Mammary epithelial cell (primary cell): ENCODE measurements at regions of chr14 and their contacts with region 1.

Region 1: DNA sequence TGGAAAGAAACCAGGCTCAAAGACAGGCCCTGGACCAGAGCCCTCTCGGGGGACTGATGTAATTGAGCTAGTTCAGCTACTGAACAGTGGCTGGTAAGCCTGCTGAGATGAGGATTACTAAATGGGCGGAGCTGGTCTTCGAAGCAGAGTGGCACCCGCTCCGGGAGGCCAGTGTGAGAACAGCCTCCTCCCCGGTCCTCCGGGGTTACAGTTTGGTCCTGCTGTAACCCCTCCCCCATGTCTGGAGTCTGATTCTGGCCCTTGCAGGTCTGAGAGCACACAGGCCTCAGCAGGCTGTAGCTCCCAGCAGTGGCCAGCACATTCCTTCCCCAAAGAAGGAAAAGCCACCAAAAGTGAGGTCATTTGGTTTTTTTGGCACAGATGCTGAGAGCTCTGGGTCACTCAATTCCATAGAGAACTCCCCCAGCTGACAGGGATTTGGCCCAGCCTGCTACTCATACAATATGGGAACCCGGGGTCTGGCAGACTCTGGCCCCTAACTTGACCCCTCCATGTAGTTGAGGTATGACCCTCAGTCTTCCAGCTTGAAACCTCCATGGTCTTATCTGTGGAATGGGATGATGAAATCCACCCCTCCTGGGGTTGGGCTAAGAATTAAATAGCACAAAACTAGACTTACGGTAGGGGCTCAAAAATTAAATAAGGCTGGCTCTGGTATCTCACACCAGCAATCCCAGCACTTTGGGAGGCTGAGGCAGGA is 39.0 kb downstream of the ACTN1 start:
- DNase-seq: peak; percentile 92
- H3K4me3 ChIP-seq: no peak overlapping the region
- H3K27ac ChIP-seq: peak overlapping the region; percentile 64
- H3K4me1 ChIP-seq: peaks cover 96% of the 10 kb centered on the region
- H3K27me3 ChIP-seq: no peaks in the 10 kb centered on the region
- CTCF ChIP-seq: no peak

Region 2: DNA sequence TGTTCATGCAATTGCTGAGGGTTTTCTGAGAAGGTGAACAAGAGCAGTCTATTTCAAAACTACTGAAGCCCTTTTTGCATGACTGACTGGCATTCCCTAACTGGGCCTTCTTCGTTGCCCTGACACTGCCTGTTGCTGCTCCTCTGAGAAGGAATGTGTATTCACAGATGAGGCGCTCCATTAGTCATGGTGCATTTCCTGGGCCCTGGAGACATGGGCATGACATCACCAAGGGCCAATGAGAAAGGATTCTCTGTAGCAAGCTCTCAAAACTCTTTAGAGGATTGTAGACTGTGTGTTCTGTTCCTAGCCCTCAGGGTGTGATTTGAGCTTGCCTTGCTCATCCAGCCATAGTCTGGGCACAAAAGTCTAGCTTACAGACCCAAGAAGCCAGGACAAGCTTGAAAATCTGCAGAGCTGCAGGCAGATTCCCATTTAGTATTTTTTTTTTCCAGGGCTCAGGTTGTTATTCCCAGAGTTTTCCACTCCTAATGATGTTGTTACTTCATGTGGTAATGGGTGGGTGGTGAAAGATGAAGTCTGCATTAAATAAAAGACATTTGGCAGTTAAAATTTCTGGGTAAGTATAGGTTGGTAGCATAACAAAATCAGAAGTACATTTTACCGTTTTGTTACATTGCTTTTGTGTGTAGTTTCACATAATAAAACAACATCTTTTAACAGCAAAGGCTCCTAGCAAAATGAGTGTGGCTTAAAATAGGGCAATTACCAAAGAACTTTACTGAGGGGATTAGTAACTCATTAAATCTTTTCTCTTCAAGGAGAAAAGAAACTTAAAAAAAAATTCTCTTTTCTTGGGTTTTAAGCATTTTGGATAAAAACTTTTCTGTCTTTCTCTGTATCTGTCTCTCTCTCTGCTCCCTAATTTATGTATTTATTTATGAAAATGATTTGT is 802.1 kb before region 1 on chr14:
- CTCF ChIA-PET with region 1: no interaction called
- dilution Hi-C with region 1: no loop called
- in situ Hi-C with region 1: no loop called
- intact Hi-C with region 1: loop called (anchors 10 kb)
- DNase-seq: peak; percentile 99
- H3K4me3 ChIP-seq: no peak overlapping the region
- H3K27ac ChIP-seq: peak overlapping the region; percentile 99
- H3K4me1 ChIP-seq: peaks cover 63% of the 10 kb centered on the region
- H3K27me3 ChIP-seq: no peaks in the 10 kb centered on the region
- CTCF ChIP-seq: no peak

Region 3: GRCh38 chr14:68874746-68875155 is 65.3 kb before region 1 on chr14:
- CTCF ChIA-PET with region 1: no interaction called
- dilution Hi-C with region 1: loop called (anchors 5 kb)
- in situ Hi-C with region 1: no loop called
- intact Hi-C with region 1: loop called (anchors 2 kb)
- DNase-seq: no peak
- H3K4me3 ChIP-seq: no peak overlapping the region
- H3K27ac ChIP-seq: no peak overlapping the region
- H3K4me1 ChIP-seq: no peaks in the 10 kb centered on the region
- H3K27me3 ChIP-seq: no peaks in the 10 kb centered on the region
- CTCF ChIP-seq: no peak

Region 4: GRCh38 chr14:68926236-68926635 is 13.8 kb before region 1 on chr14:
- CTCF ChIA-PET with region 1: no interaction called
- dilution Hi-C with region 1: no loop called
- in situ Hi-C with region 1: no loop called
- intact Hi-C with region 1: loop called (anchors 1 kb)
- DNase-seq: no peak
- H3K4me3 ChIP-seq: no peak overlapping the region
- H3K27ac ChIP-seq: no peak overlapping the region
- H3K4me1 ChIP-seq: peaks cover 41% of the 10 kb centered on the region
- H3K27me3 ChIP-seq: no peaks in the 10 kb centered on the region
- CTCF ChIP-seq: peak; percentile 64 to 78

Region 5: DNA sequence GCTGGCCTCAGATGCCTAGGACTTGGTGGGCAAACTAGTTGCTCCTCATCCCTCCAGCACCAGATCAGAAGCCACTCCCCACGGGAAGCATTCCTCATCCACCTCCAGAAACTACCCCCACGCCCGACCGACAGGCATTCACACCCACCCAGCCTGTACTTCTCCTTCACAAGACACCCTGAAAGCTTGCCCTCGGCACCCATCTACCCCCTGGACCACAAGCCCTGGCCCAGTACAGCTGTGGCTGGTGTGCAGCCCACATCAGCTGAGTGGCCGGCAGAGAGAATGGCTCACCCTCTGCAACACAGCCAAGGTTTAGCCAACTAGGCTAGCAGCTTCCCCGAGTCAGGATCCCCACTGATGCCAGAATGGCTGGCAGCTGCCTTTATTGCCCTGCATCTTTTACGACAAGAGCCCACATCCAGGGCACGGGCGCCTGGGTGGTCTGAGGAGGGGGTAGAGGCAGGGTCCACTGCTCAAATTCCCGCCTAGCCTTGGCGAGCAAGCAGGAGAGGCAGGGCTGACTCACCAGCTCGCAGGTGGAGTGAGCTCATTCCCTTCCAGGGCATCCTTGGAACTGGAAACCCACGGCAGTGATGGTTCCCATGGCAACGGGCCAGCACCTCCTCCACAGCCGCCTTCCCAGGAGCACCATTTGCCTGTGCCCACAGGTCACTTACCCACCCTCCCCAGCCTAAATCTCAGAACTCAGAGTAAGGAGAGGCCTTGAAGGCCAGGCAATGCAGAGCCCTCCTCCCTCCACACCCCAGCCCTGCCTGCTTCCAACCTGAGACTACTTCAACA is 21.9 kb after region 1 on chr14:
- CTCF ChIA-PET with region 1: no interaction called
- dilution Hi-C with region 1: no loop called
- in situ Hi-C with region 1: no loop called
- intact Hi-C with region 1: loop called (anchors 1 kb)
- DNase-seq: peak; percentile 92
- H3K4me3 ChIP-seq: no peak overlapping the region
- H3K27ac ChIP-seq: peak overlapping the region; percentile 43
- H3K4me1 ChIP-seq: peaks cover 99% of the 10 kb centered on the region
- H3K27me3 ChIP-seq: no peaks in the 10 kb centered on the region
- CTCF ChIP-seq: no peak

Region 6: GRCh38 chr14:69090187-69090789 is 150.2 kb after region 1 on chr14:
- CTCF ChIA-PET with region 1: interaction called, 4 read pairs
- dilution Hi-C with region 1: no loop called
- in situ Hi-C with region 1: loop called in 1 of 2 experiments (anchors 10 kb)
- intact Hi-C with region 1: loop called (anchors 1 kb)
- DNase-seq: peak; percentile 55
- H3K4me3 ChIP-seq: no peak overlapping the region
- H3K27ac ChIP-seq: no peak overlapping the region
- H3K4me1 ChIP-seq: peaks cover 55% of the 10 kb centered on the region
- H3K27me3 ChIP-seq: no peaks in the 10 kb centered on the region
- CTCF ChIP-seq: peak; percentile 82 to 92

Region 7: GRCh38 chr14:69346710-69347109 is 406.7 kb after region 1 on chr14:
- CTCF ChIA-PET with region 1: no interaction called
- dilution Hi-C with region 1: no loop called
- in situ Hi-C with region 1: no loop called
- intact Hi-C with region 1: no loop called
- DNase-seq: no peak
- H3K4me3 ChIP-seq: no peak overlapping the region
- H3K27ac ChIP-seq: no peak overlapping the region
- H3K4me1 ChIP-seq: no peaks in the 10 kb centered on the region
- H3K27me3 ChIP-seq: no peaks in the 10 kb centered on the region
- CTCF ChIP-seq: peak; percentile 39 to 47

Region 8: GRCh38 chr14:69561893-69562292 is 621.8 kb after region 1 on chr14:
- CTCF ChIA-PET with region 1: no interaction called
- dilution Hi-C with region 1: no loop called
- in situ Hi-C with region 1: no loop called
- intact Hi-C with region 1: no loop called
- DNase-seq: no peak
- H3K4me3 ChIP-seq: no peak overlapping the region
- H3K27ac ChIP-seq: no peak overlapping the region
- H3K4me1 ChIP-seq: peaks cover 5% of the 10 kb centered on the region
- H3K27me3 ChIP-seq: no peaks in the 10 kb centered on the region
- CTCF ChIP-seq: no peak